K562 (cell line): ENCODE measurements at regions of chr1 and their contacts with region 1.

Region 1: GRCh38 chr1:19074902-19075721 is 118.6 kb upstream of the IFFO2 start:
- DNase-seq: no peak
- ATAC-seq: no peak
- H3K4me3 ChIP-seq: no peak overlapping the region
- H3K27ac ChIP-seq: no peak overlapping the region
- H3K4me1 ChIP-seq: peaks cover 0 to 7% of the 10 kb centered on the region in 2 experiments; a peak in 2 of 5 replicates
- H3K27me3 ChIP-seq: peaks cover 0 to 7% of the 10 kb centered on the region in 2 experiments; a peak in 2 of 5 replicates
- CTCF ChIP-seq: no peak
- EP300 ChIP-seq: no peak
- POLR2A ChIP-seq: no peak
- RAD21 ChIP-seq: no peak

Region 2: DNA sequence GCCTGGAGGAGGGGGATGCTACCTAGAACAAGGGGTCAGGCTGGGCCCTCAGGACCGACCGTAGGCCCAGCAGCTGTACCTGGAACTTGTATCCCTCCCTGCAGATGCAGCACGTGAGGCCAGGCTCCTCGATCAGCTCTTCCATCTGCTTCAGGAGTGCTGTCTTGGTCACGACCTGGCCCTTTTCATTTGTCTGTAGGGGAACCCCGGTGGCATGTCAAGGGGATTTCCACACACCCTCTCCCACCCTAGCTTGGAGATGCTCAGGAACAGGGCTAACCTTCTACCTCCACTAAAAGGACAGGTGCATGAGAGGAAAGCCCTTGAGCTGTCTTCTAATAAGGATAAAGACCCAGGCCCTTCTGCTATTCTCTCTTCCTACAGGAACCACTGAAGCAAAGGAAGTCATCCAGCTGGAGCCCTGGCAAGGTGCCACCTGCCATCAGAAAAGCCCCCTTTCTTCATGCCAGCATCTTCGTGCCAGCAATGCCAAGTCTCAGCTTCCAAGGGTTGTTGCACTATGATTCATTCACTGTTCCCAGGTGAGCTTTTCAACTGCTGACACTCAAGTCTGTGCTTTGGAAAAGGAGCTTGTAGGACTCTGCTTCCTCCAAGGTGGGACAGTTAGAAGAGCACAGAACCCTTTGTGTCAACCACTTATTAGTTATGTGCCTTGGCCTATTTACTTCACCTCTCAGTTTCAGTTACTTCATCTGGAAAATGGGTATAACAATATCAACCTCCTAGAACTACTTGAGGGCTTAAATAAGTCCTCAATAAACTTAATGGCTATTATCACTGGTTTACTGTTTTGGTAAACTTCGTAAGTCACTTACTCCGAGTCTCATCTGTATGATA is 12.9 kb after region 1 on chr1:
- CTCF ChIA-PET with region 1: no interaction called
- POLR2A ChIA-PET with region 1: interaction called, 29 read pairs
- in situ Hi-C with region 1: no loop called
- intact Hi-C with region 1: no loop called
- DNase-seq: no peak
- ATAC-seq: no peak
- H3K4me3 ChIP-seq: no peak overlapping the region
- H3K27ac ChIP-seq: no peak overlapping the region
- H3K4me1 ChIP-seq: no peaks in the 10 kb centered on the region
- H3K27me3 ChIP-seq: no peaks in the 10 kb centered on the region
- CTCF ChIP-seq: no peak
- EP300 ChIP-seq: no peak
- POLR2A ChIP-seq: no peak
- RAD21 ChIP-seq: no peak

Region 3: DNA sequence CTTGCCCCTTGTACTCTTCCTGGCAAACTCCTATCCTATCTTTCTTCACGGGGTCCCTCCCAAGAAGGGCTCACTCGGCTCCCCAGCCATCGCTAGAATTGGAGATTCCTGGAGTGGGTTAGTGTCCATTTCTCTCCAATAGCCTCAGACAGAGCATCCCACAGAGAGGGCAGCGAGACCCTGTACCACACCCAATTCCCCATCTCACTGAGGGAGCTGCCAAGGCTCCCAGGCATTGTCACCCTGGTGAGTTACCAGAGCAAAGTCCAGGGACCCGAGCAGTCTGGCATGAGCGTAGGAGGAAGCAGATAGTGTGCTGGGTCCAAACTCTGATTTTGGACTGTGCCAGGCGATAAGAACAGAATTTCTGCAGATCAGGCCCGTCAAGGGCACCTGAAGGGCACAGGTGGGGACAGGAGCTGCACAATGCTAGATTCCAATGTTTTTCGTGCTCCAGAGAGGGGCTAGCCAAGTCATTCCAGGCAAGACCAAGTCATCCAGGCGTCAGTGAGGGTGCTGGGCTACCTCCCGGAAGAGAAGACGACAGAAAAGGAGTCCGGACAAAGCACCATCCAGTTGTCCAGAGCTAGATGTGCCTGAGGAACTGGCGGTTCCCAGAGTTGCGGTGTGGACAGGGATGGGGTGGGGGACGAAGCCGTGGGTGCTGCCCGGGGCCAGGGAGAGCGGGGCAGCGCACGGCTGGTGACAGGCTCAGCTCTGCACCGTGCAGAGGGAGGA is 198.2 kb after region 1 on chr1:
- CTCF ChIA-PET with region 1: no interaction called
- POLR2A ChIA-PET with region 1: no interaction called
- in situ Hi-C with region 1: no loop called
- intact Hi-C with region 1: no loop called
- DNase-seq: no peak
- ATAC-seq: no peak
- H3K4me3 ChIP-seq: no peak overlapping the region
- H3K27ac ChIP-seq: no peak overlapping the region
- H3K4me1 ChIP-seq: peaks cover 0 to 6% of the 10 kb centered on the region in 2 experiments; a peak in 2 of 5 replicates
- H3K27me3 ChIP-seq: no peaks in the 10 kb centered on the region
- CTCF ChIP-seq: no peak
- EP300 ChIP-seq: no peak
- POLR2A ChIP-seq: no peak
- RAD21 ChIP-seq: no peak